ENCODE measurements at regions of chr7 and their contacts with region 1.

Region 1: GRCh38 chr7:2886900-2887299 is 42.8 kb upstream of the GNA12 start:
- DNase-seq: no peak
- ATAC-seq: peak; percentile 93
- H3K4me3 ChIP-seq: no peak overlapping the region
- H3K27ac ChIP-seq: no peak overlapping the region
- H3K4me1 ChIP-seq: no peaks in the 10 kb centered on the region
- H3K27me3 ChIP-seq: no peaks in the 10 kb centered on the region
- CTCF ChIP-seq: peak; percentile 88 to 94 (median 88)
- EP300 ChIP-seq: no peak
- POLR2A ChIP-seq: no peak
- RAD21 ChIP-seq: peak; percentile 94

Region 2: DNA sequence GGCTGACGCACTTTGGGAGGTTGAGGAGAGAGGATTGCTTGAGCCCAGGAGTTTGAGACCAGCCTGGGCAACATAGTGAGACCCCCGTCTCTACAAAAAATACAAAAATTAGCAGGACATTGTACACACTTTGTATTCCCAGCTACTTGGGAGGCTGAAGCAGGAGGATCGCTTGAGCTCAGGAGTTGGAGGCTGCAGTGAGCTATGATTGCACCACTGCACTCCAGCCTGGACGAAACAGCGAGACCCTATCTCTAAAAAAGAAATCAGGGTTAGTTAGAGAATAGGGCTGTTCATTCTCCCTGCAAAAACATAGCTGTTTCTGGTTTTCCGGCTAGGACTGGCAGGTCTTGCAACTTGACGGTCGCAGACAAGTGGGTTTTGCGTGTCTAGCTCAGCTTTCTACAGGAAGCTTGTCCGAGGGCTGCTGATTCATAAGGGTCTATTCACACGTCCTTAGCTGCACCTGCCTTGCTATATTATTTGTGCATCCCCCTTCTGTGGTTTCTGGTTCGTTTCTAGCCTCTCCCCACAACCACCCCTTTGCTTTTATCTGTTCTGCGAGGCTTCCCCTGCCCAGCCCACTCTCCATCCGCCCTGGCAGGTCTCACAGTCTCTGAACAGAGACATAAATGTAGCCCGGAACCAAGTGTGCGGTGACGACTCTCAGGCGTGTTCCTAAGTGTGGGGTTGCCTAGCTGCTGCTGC is 188.2 kb before region 1 on chr7:
- CTCF ChIA-PET with region 1: no interaction called
- POLR2A ChIA-PET with region 1: no interaction called
- RAD21 ChIA-PET with region 1: no interaction called
- SMC1A ChIA-PET with region 1: no interaction called
- in situ Hi-C with region 1: no loop called
- intact Hi-C with region 1: no loop called
- DNase-seq: peak; percentile 93
- ATAC-seq: peak; percentile 96
- H3K4me3 ChIP-seq: 0 out of 2 replicates have a peak overlapping the region, but pooled peaks have one; percentile 32
- H3K27ac ChIP-seq: peak overlapping the region; percentile 38; the same call in 1 of the 2 replicates
- H3K4me1 ChIP-seq: peaks cover 21% of the 10 kb centered on the region
- H3K27me3 ChIP-seq: no peaks in the 10 kb centered on the region
- CTCF ChIP-seq: no peak
- EP300 ChIP-seq: peak; percentile 88 to 98
- POLR2A ChIP-seq: no peak
- RAD21 ChIP-seq: 0 out of 2 replicates have a peak, but pooled peaks have one; percentile 5

Region 3: GRCh38 chr7:3673524-3673923 is 786.6 kb after region 1 on chr7:
- CTCF ChIA-PET with region 1: interaction called, 10 read pairs
- POLR2A ChIA-PET with region 1: no interaction called
- RAD21 ChIA-PET with region 1: interaction called, 3 read pairs
- SMC1A ChIA-PET with region 1: interaction called, 3 read pairs
- in situ Hi-C with region 1: no loop called
- intact Hi-C with region 1: no loop called
- DNase-seq: no peak
- ATAC-seq: no peak
- H3K4me3 ChIP-seq: no peak overlapping the region
- H3K27ac ChIP-seq: no peak overlapping the region
- H3K4me1 ChIP-seq: no peaks in the 10 kb centered on the region
- H3K27me3 ChIP-seq: no peaks in the 10 kb centered on the region
- CTCF ChIP-seq: peak in 1 of 3 experiments; percentile 14; a peak in 1 of 6 replicates
- EP300 ChIP-seq: no peak
- POLR2A ChIP-seq: no peak
- RAD21 ChIP-seq: 0 out of 2 replicates have a peak, but pooled peaks have one; percentile 20

Measured in GM12878 (cell line).